ENCODE measurements at regions of chrX and their contacts with region 1.

Region 1: DNA sequence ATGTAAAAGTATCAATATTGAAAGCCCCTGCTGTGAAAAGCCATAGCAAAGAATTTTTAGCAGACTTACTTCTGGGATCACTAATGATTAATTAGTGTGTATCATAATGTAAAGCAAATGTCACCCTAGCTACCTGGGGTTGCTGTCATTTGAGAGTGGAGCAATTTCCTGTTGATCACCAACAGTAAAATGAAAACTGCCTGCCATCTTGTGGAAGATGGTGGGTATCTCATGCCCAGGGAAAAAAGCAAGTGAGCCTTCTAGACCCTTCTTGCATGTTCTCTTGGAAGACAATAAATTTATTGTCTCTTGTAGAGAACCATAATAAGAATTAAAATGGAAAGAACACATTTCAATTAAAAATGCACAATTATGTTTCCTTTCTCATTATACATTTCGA is 360.2 kb downstream of the ZIC3 start:
- DNase-seq: peak; percentile 47
- H3K4me3 ChIP-seq: no peak overlapping the region
- H3K27ac ChIP-seq: no peak overlapping the region
- H3K4me1 ChIP-seq: no peaks in the 10 kb centered on the region
- H3K27me3 ChIP-seq: no peaks in the 10 kb centered on the region
- CTCF ChIP-seq: peak; percentile 65

Region 2: GRCh38 chrX:136735601-136736000 is 1190.5 kb before region 1 on chrX:
- CTCF ChIA-PET with region 1: no interaction called
- POLR2A ChIA-PET with region 1: no interaction called
- intact Hi-C with region 1: no loop called
- DNase-seq: peak; percentile 76
- H3K4me3 ChIP-seq: no peak overlapping the region
- H3K27ac ChIP-seq: no peak overlapping the region
- H3K4me1 ChIP-seq: peaks cover 14% of the 10 kb centered on the region
- H3K27me3 ChIP-seq: no peaks in the 10 kb centered on the region
- CTCF ChIP-seq: peak; percentile 9; the same call in 1 of the 2 replicates

Region 3: DNA sequence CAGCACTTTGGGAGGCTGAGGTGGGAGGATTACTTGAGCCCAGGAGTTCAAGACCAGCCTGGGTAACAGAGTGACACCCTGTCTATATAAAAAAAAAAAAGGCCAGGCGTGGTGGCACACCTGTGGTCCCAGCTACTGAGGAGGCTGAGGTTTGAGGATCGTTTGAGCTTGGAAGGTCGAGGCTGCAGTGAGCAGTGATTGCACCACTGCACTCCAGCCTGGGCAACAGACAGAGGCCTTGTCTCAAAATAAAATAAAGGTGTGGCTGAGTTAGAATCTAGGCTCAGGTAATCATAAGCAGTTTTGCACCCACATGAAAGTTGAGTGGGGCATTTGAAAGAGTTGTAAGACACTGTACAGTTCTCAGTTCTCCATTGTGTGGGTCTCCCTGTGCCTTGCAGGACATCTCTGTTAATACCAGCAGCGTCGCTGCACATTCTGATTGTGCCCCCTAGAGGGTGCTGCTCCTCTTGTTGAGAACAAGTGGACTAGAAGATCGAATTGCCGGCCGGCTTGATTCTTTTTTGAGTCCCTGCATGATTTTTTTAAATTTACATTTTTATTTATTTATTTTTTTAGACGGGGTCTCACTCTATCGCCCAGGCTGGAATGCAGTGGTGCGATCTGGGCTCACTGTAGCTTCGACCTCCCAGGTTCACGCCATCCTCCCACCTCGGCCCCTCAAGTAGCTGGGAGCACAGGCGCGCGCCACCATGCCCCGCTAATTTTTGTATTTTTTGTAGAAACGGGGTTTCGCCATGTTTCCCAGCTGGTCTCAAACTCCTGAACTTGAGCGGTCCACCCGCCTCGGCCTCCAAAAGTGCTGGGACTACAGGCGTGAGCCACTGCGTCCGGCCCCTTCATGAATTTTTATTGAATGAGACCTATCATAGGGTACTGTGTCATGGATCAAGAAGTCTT is 972.0 kb before region 1 on chrX:
- CTCF ChIA-PET with region 1: no interaction called
- POLR2A ChIA-PET with region 1: no interaction called
- intact Hi-C with region 1: loop called (anchors 5 kb)
- DNase-seq: peak; percentile 87
- H3K4me3 ChIP-seq: no peak overlapping the region
- H3K27ac ChIP-seq: no peak overlapping the region
- H3K4me1 ChIP-seq: no peaks in the 10 kb centered on the region
- H3K27me3 ChIP-seq: no peaks in the 10 kb centered on the region
- CTCF ChIP-seq: peak; percentile 75

Region 4: DNA sequence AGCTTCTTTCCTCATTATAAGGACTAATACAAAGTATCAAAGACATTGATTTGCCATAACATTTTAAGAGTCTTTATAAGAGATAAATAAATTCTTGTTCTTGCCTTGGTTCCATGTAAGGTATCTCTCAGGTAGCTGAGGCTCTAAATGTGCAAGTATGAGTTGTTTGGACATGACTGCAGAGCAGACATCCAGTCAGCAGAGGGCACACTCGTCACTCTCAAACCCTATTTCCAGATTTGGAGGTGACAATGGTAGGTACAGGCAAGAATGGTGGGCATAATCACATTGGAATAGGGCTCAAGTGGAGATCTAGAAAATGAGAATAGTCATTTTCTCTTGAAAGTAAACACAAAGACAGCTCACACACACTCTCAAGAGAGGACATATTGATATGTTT is 493.5 kb before region 1 on chrX:
- CTCF ChIA-PET with region 1: interaction called, 5 read pairs
- POLR2A ChIA-PET with region 1: no interaction called
- intact Hi-C with region 1: loop called (anchors 2 kb)
- DNase-seq: peak; percentile 55
- H3K4me3 ChIP-seq: no peak overlapping the region
- H3K27ac ChIP-seq: no peak overlapping the region
- H3K4me1 ChIP-seq: no peaks in the 10 kb centered on the region
- H3K27me3 ChIP-seq: peaks cover 7% of the 10 kb centered on the region
- CTCF ChIP-seq: peak; percentile 79

Region 5: GRCh38 chrX:137565921-137566745 is 360.0 kb before region 1 on chrX and contains the start of gene ZIC3:
- CTCF ChIA-PET with region 1: no interaction called
- POLR2A ChIA-PET with region 1: no interaction called
- intact Hi-C with region 1: loop called (anchors 5 kb)
- DNase-seq: peak; percentile 85
- H3K4me3 ChIP-seq: peak within 1 kb of the TSS; percentile 58
- H3K27ac ChIP-seq: peak within 1 kb of the TSS; percentile 64
- H3K4me1 ChIP-seq: peaks cover 32% of the 10 kb centered on the region
- H3K27me3 ChIP-seq: no peaks in the 10 kb centered on the region
- CTCF ChIP-seq: no peak
- total RNA-seq, gene ZIC3: 8.9 and 12.3 TPM in 2 replicates